Activated naive CD4-positive, alpha-beta T cell treated with anti-CD3 and anti-CD28 coated beads, Interleukin-2, amount 10 ng/mL, durations not matched to agents 7 days and 5 days (primary cell): ENCODE measurements at regions of chr10 and their contacts with region 1.

Region 1: DNA sequence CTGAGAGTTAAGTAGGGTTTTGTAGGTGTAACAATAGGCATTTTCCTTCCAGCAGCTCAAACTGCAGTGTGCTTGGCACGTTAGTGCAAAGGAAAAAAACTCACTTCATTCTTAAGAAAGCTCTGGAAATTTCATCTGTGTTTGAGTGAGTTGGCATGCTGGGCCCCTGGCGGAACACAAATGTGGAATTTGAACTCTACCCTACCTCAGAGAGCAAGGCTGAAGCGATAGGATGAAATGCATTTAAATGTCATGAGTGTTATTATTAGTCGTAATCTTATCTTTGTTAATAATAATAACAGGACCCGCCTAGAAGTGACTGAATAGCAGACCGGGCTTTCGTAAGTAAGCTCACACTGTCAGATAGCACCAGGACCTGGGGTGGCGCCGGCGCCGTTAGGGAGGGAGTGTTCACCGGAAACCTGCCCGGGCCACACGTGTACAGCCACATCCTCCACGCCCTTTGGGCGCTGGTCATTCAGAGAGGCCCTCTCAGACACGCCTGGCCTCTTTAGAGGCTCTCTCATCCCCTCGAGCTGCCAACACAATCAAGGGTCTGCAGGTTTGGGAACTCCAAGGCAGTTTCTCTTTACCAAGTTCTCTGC is 63.5 kb downstream of the GRK5 start:
- DNase-seq: peak; percentile 61
- H3K4me3 Mint-ChIP-seq: peak overlapping the region; percentile 21
- H3K27ac Mint-ChIP-seq: peak overlapping the region; percentile 93
- H3K4me1 Mint-ChIP-seq: peaks cover 63% of the 10 kb centered on the region
- H3K27me3 Mint-ChIP-seq: no peaks in the 10 kb centered on the region

Region 2: GRCh38 chr10:119281581-119282071 is 10.8 kb after region 1 on chr10:
- CTCF ChIA-PET with region 1: interaction called, 20 read pairs
- DNase-seq: no peak
- H3K4me3 Mint-ChIP-seq: no peak overlapping the region
- H3K27ac Mint-ChIP-seq: no peak overlapping the region
- H3K4me1 Mint-ChIP-seq: peaks cover 55% of the 10 kb centered on the region
- H3K27me3 Mint-ChIP-seq: no peaks in the 10 kb centered on the region

Region 3: DNA sequence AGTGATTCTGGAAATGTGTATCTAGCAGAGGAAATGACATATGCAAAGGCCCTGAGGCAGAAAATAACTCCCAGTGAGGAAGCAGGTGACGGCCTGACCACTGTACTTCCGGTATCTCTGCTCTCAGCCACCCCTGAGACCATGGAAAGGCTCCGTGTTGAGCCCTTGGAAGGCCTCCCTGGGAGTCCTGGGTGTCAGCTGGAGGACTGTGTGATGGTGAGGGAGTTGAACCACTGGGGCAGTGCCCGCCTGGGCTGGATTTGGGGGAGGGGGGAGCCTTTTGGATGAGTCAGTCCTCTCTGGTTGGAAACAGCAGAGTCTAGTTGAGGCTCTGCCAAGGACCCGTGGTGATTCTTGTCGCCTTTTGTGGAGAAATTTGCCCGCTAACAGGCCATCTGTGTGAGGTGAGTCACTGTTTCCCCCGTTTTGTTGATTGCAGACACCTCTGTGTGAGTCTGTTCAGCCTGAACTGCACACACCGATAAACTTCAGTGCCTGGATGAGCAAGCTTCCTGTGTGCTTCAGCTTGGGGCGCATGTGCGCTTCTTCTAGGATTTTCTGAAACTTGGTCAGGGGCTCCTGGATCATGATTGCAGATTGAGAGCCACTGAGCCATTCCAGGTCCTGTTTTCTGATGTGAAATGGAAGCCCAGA is 35.1 kb after region 1 on chr10:
- CTCF ChIA-PET with region 1: interaction called, 19 read pairs
- DNase-seq: peak; percentile 86
- H3K4me3 Mint-ChIP-seq: peak overlapping the region; percentile 72
- H3K27ac Mint-ChIP-seq: peak overlapping the region; percentile 99
- H3K4me1 Mint-ChIP-seq: peaks cover 80% of the 10 kb centered on the region
- H3K27me3 Mint-ChIP-seq: peaks cover 28% of the 10 kb centered on the region